ENCODE measurements at regions of chr3 and their contacts with region 1.

Region 1: DNA sequence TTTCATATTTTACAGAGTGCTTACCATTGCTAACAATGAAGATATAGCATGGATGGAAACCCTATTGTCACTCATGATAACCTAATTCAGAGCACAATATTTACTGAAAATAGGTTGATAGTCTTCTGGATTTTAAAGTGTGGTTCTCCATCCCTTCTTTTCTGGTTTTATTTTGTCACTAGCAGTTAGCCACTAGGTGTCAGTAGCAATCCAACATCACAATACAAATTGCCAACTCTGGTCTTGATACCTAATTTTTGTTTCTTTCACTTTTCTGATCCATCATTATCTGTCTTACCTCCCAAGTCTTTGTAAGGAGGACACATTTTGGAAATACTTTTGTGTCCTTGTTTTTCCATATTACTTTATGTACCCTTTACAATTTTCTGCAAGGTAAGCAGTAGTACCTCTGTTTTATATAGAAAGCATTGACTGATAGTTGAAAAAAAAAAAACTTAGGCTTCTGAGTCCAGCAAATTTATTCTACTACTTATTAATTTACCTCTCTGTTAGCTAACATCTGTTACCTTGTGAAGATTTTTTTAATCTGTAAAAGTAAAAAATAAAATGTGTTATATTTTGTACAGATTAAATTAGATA is 28.3 kb upstream of the CRYBG3 start:
- DNase-seq: no peak
- H3K4me3 ChIP-seq: no peak overlapping the region
- H3K27ac ChIP-seq: no peak overlapping the region
- H3K4me1 ChIP-seq: no peaks in the 10 kb centered on the region
- H3K27me3 ChIP-seq: no peaks in the 10 kb centered on the region
- CTCF ChIP-seq: peak; percentile 76 to 83

Region 2: DNA sequence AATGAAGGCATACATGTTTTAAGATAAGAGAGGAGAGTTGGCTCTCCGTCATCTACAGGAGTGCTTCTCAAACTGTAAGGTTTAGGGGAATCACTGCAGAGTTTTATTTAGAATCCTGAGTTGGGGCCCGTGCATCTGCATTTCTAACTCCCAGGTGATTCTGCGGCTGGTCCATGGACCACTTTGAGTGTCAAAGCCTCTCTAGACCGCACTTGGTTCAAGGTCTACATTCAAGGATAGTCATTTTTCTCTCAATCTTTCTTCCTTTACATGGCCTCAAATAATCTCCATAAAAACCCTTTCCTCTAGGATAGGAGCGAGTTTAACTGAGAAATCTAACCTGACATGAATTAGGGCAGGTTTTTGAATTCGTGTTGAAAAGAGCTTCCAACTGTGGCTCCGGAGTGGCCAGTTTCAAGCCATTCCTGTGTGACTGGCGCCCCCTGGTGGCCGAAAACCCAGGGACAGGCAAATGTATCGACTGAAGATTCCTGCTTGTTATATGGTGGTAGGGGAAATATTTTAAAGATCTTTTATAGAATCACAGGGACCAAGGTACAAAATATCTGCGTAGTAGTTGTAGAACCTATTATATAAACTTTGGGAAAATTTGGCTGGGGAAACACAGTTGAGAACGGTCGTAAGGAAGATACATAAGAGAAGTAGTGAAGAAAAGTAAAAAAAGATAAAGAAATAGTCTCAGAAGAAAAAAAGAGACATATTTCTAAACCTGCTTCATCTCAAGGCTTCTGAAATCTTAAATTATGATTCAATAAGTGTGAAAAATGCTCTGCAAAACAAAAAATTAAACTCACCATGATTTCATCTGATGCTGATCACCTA is 229.7 kb after region 1 on chr3:
- intact Hi-C with region 1: loop called (anchors 2 kb)
- DNase-seq: peak; percentile 88 to 91
- H3K4me3 ChIP-seq: no peak overlapping the region
- H3K27ac ChIP-seq: no peak overlapping the region
- H3K4me1 ChIP-seq: no peaks in the 10 kb centered on the region
- H3K27me3 ChIP-seq: peaks cover 0 to 14% of the 10 kb centered on the region in 2 donors
- CTCF ChIP-seq: peak; percentile 90 to 93

Region 3: GRCh38 chr3:98151241-98151640 is 357.7 kb after region 1 on chr3:
- intact Hi-C with region 1: no loop called
- DNase-seq: no peak
- H3K4me3 ChIP-seq: no peak overlapping the region
- H3K27ac ChIP-seq: no peak overlapping the region
- H3K4me1 ChIP-seq: no peaks in the 10 kb centered on the region
- H3K27me3 ChIP-seq: no peaks in the 10 kb centered on the region
- CTCF ChIP-seq: no peak

Measured in tibial artery (tissue), 4 donors.